Tibial artery (tissue), 4 donors: ENCODE measurements at regions of chr16 and their contacts with region 1.

Region 1: DNA sequence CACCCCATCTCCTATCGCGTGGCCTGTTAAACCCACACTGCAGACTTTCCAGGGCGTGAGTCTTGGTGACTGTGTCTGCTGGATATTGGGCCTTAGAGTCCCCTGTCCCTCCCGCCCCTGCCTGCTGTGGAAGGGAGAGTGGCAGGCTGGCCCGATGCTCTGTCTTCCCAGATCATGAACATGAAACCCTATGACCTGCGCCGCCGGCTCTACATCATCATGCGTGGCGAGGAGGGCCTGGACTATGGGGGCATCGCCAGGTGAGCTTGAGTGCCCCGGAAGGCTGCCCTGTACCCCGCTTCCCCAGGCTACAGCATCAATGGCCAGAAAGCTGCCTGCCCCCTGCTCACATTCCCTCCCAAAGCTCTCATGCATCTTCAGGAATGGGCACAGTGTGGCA is 19.5 kb upstream of the CLEC18A start:
- DNase-seq: no peak
- H3K4me3 ChIP-seq: no peak overlapping the region
- H3K27ac ChIP-seq: peak overlapping the region; percentile 96 to 97
- H3K4me1 ChIP-seq: peaks cover 0 to 98% (median 51%) of the 10 kb centered on the region in 4 donors
- H3K27me3 ChIP-seq: no peaks in the 10 kb centered on the region
- CTCF ChIP-seq: no peak

Region 2: DNA sequence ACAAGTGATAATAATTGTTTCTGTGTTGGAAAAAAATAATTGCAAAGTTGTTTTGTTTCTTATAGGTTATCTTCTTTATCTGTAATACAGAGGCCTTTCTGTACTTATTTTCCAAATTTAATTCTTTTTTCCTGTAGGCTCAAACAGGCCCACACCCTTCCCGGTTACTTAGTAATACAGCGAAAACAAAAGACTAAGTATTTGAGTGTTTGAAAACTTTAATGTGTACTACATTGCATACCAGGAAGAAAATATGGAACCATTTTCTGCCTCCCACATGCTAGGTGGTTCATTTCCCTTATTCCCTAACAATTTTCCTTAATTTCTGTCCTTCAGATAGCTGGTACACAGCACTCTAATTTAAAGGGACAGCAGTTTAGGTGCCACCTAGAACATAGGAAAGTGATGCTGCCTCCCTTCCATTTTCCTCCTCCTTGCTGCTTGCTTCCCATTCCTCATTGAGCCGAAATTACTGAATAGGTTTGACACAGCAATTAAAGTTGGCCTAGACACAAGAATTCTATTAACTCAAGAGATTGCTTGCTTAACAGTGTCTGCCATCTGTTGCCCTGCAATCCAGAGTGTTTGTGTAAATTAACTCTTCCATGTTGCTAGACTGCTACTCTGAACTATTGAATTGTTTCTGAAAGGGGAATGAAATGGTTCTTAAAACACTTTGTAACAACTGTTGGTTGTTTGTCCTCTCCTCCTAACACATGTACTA is 483.0 kb before region 1 on chr16:
- intact Hi-C with region 1: no loop called
- DNase-seq: no peak
- H3K4me3 ChIP-seq: no peak overlapping the region
- H3K27ac ChIP-seq: no peak overlapping the region
- H3K4me1 ChIP-seq: peaks cover 0 to 21% (median 8%) of the 10 kb centered on the region in 4 donors
- H3K27me3 ChIP-seq: no peaks in the 10 kb centered on the region
- CTCF ChIP-seq: no peak

Region 3: GRCh38 chr16:69796351-69797118 is 135.1 kb before region 1 on chr16:
- intact Hi-C with region 1: loop called (anchors 1 kb)
- DNase-seq: no peak
- H3K4me3 ChIP-seq: no peak overlapping the region
- H3K27ac ChIP-seq: peak overlapping the region; percentile 5 to 32
- H3K4me1 ChIP-seq: peaks cover 0 to 13% (median 6%) of the 10 kb centered on the region in 4 donors
- H3K27me3 ChIP-seq: no peaks in the 10 kb centered on the region
- CTCF ChIP-seq: peak; percentile 93

Region 4: GRCh38 chr16:70151391-70151790 is 219.8 kb after region 1 on chr16:
- intact Hi-C with region 1: no loop called
- DNase-seq: no peak
- H3K4me3 ChIP-seq: no peak overlapping the region
- H3K27ac ChIP-seq: no peak overlapping the region
- H3K4me1 ChIP-seq: no peaks in the 10 kb centered on the region
- H3K27me3 ChIP-seq: no peaks in the 10 kb centered on the region
- CTCF ChIP-seq: no peak